Right ventricle myocardium inferior (tissue), 1 donor: ENCODE measurements at regions of chr4 and their contacts with region 1.

Region 1: DNA sequence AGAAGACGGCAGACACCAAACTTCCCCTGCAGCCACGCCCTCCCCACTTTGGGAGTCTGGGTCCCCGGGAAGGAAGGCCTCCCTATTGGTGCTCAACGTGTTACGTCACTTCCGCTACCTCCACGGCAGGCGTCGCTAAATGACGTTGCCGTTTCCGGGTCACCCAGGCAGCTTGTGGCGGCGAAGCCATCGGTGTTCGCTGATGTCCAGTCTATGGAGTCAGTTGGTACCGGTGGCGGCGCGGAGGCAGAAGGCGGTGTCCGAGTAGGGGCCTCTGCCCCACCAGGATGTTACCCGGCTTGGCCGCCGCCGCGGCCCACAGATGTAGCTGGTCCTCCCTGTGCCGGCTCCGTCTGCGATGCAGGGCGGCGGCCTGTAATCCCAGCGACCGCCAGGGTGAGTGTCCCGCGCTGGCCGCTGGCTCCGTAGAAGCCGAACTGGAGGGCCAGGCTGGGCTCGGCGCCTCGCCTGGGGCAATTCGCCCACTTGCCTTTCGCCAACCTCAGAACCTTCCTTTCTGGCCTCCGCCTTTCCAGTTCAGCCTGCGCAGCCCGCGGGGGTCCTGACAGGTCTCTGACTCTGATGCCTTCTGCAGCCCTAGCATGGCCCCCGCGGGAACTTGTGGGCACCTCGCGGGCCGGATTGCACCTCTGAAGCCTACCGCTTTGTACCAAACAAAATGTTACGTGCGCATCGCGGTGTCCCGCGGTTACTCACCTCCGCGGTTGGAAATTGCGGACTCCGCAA is at the start of gene SLC30A9:
- DNase-seq: peak; percentile 97
- ATAC-seq: peak; percentile 99
- total RNA-seq, gene SLC30A9: 74.8 TPM

Region 2: GRCh38 chr4:41934815-41935651 is 55.5 kb before region 1 on chr4 and contains the start of gene TMEM33:
- intact Hi-C with region 1: loop called (anchors 2 kb)
- DNase-seq: peak; percentile 89
- ATAC-seq: peak; percentile 97
- total RNA-seq, gene TMEM33: 21.5 TPM

Region 3: GRCh38 chr4:42104521-42104920 is 114.0 kb after region 1 on chr4:
- intact Hi-C with region 1: no loop called
- DNase-seq: no peak
- ATAC-seq: no peak